Body of pancreas (tissue), 4 donors: ENCODE measurements at regions of chr2 and their contacts with region 1.

Region 1: GRCh38 chr2:127324635-127325034 is 30.7 kb upstream of the ERCC3 start:
- DNase-seq: peak; percentile 17 to 46 (median 20)
- ATAC-seq: peak; percentile 64
- H3K4me3 ChIP-seq: no peak overlapping the region
- H3K27ac ChIP-seq: no peak overlapping the region
- H3K4me1 ChIP-seq: no peaks in the 10 kb centered on the region
- H3K27me3 ChIP-seq: no peaks in the 10 kb centered on the region
- CTCF ChIP-seq: peak in 6 of 7 experiments; percentile 31 to 64 (median 58)
- POLR2A ChIP-seq: no peak

Region 2: GRCh38 chr2:127415593-127416505 is 91.2 kb after region 1 on chr2:
- intact Hi-C with region 1: no loop called
- DNase-seq: peak; percentile 85 to 89 (median 86)
- ATAC-seq: peak; percentile 95
- H3K4me3 ChIP-seq: peak overlapping the region in 1 of 2 donors; percentile 24
- H3K27ac ChIP-seq: peak overlapping the region in 3 of 4 donors; percentile 18 to 55 (median 41)
- H3K4me1 ChIP-seq: peaks cover 33% of the 10 kb centered on the region
- H3K27me3 ChIP-seq: no peaks in the 10 kb centered on the region
- CTCF ChIP-seq: peak; percentile 69 to 93 (median 83)
- POLR2A ChIP-seq: peak in 1 of 3 donors; percentile 31

Region 3: GRCh38 chr2:127486247-127487058 is 161.8 kb after region 1 on chr2:
- intact Hi-C with region 1: loop called (anchors 10 kb)
- DNase-seq: no peak
- ATAC-seq: no peak
- H3K4me3 ChIP-seq: no peak overlapping the region
- H3K27ac ChIP-seq: no peak overlapping the region
- H3K4me1 ChIP-seq: no peaks in the 10 kb centered on the region
- H3K27me3 ChIP-seq: no peaks in the 10 kb centered on the region
- CTCF ChIP-seq: no peak
- POLR2A ChIP-seq: no peak